Mammary epithelial cell (primary cell): ENCODE measurements at regions of chr18 and their contacts with region 1.

Region 1: DNA sequence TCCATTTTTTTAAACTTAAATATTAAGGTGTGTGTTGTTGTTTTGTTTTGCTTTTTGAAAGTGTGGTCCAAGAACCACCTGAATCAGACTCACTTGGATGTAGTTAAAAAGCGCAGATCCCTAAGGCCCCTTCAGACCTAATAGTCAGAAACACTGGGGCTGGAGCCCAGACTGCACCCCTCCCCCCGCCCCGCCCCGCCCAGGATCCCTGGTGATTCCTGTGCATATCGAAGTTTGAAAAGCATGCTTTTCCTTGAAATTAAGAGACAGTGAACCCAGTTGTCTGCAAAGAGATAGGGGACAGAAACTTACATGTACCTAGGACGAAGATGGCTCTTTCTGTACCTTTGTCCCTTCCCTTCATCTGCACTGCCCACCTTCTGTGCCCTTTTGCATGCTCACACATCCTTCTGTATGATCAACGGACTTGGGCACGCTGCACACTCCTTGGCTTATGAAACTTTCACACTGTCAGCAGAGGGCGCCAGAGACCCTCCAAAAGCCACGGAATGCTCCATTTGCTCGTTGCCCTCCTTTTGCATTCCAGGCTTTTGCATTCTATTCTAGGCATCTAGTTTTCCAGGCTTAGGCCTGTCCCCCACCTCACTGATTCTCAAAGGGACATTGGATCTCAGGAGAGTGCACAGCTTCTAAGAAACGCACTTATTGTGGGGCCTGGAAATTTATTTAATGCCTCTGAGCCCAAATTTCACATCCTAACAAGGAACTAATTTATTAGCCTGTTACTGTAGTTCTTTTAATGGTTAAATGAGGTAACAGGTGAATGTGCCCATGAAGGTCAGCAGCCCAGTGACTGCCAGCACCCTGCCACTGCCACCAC is 32.8 kb upstream of the SLC14A1 start:
- DNase-seq: peak; percentile 66
- H3K4me3 ChIP-seq: no peak overlapping the region
- H3K27ac ChIP-seq: no peak overlapping the region
- H3K4me1 ChIP-seq: no peaks in the 10 kb centered on the region
- H3K27me3 ChIP-seq: no peaks in the 10 kb centered on the region
- CTCF ChIP-seq: peak; percentile 85 to 88

Region 2: DNA sequence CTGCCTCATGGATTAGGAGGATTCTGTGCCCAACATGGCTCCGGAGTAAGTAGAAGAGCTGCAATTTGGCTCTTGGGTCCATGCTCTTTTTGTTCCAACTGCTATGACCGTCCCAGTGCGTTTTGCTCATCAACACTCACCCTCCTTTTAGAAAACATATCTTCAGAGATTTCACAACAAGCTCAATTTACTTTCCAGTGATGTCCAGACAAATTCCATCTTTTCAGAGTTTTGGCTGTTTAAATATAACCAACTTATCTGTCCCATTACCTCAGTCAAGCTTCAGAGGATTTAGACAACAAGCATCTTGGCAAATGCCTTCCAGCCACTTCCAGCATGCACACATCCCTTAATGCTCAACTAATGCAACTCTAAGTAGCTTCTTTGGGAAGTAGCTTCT is 82.8 kb before region 1 on chr18:
- CTCF ChIA-PET with region 1: no interaction called
- dilution Hi-C with region 1: no loop called
- in situ Hi-C with region 1: no loop called
- intact Hi-C with region 1: no loop called
- DNase-seq: no peak
- H3K4me3 ChIP-seq: no peak overlapping the region
- H3K27ac ChIP-seq: no peak overlapping the region
- H3K4me1 ChIP-seq: no peaks in the 10 kb centered on the region
- H3K27me3 ChIP-seq: peaks cover 6% of the 10 kb centered on the region
- CTCF ChIP-seq: no peak

Region 3: DNA sequence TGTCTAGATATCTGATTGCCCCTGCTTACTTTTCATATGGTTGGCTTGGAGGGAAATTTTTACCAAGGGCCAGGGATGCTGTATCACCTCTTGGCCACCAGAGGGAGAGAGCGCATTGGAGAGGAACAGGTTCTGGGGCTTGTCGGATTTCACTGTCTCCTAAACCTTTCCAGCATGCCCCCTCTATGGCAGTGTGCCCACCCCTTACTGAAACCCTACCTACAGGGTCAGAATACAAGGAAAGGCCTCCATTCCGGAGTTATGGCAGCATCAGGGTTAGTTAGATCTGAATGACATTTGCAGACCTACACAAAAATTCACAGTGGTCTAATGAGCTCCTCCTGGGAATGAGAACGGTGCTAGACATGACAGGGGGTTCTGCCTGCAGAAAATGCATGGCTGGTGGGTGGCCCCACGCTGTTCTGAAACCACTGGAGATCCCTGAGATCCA is 70.1 kb before region 1 on chr18:
- CTCF ChIA-PET with region 1: no interaction called
- dilution Hi-C with region 1: no loop called
- in situ Hi-C with region 1: no loop called
- intact Hi-C with region 1: loop called (anchors 2 kb)
- DNase-seq: peak; percentile 16
- H3K4me3 ChIP-seq: no peak overlapping the region
- H3K27ac ChIP-seq: no peak overlapping the region
- H3K4me1 ChIP-seq: peaks cover 25% of the 10 kb centered on the region
- H3K27me3 ChIP-seq: no peaks in the 10 kb centered on the region
- CTCF ChIP-seq: peak; percentile 96 to 97

Region 4: GRCh38 chr18:45722899-45723298 is 31.7 kb after region 1 on chr18:
- CTCF ChIA-PET with region 1: no interaction called
- dilution Hi-C with region 1: no loop called
- in situ Hi-C with region 1: no loop called
- intact Hi-C with region 1: loop called (anchors 2 kb)
- DNase-seq: peak; percentile 57
- H3K4me3 ChIP-seq: no peak overlapping the region
- H3K27ac ChIP-seq: no peak overlapping the region
- H3K4me1 ChIP-seq: peaks cover 3% of the 10 kb centered on the region
- H3K27me3 ChIP-seq: no peaks in the 10 kb centered on the region
- CTCF ChIP-seq: peak; percentile 81 to 94

Region 5: GRCh38 chr18:45775241-45775676 is 84.1 kb after region 1 on chr18:
- CTCF ChIA-PET with region 1: no interaction called
- dilution Hi-C with region 1: loop called (anchors 5 kb)
- in situ Hi-C with region 1: no loop called
- intact Hi-C with region 1: no loop called
- DNase-seq: no peak
- H3K4me3 ChIP-seq: peak overlapping the region in 1 of 3 experiments; percentile 35
- H3K27ac ChIP-seq: peak overlapping the region; percentile 68
- H3K4me1 ChIP-seq: peaks cover 35% of the 10 kb centered on the region
- H3K27me3 ChIP-seq: no peaks in the 10 kb centered on the region
- CTCF ChIP-seq: no peak

Region 6: GRCh38 chr18:45879681-45880655 is 188.8 kb after region 1 on chr18:
- CTCF ChIA-PET with region 1: no interaction called
- dilution Hi-C with region 1: no loop called
- in situ Hi-C with region 1: loop called (anchors 5 to 10 kb)
- intact Hi-C with region 1: loop called (anchors 1 kb)
- DNase-seq: peak; percentile 50
- H3K4me3 ChIP-seq: no peak overlapping the region
- H3K27ac ChIP-seq: no peak overlapping the region
- H3K4me1 ChIP-seq: no peaks in the 10 kb centered on the region
- H3K27me3 ChIP-seq: no peaks in the 10 kb centered on the region
- CTCF ChIP-seq: peak; percentile 99

Region 7: DNA sequence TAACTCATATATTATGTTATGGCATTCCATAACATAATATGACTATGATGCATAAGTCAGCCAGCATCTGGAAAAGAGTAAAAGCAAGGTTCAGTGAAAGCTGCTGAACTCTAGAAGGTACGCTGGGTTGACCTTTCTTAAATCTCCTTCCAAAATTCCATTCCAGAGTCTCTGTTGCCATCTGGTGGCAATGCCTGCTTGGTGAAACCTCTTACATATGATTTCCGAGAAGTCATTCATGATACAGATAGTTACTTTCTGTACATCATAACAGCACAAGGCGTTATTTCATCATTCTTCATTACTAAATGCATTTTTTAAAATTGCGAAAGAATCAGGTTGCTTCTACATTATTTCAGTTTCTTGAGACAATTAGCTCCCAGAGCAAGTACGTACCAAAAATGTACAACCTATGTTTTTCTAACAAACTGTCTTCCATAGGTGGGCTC is 282.9 kb after region 1 on chr18:
- CTCF ChIA-PET with region 1: no interaction called
- dilution Hi-C with region 1: no loop called
- in situ Hi-C with region 1: no loop called
- intact Hi-C with region 1: loop called (anchors 1 kb)
- DNase-seq: peak; percentile 76
- H3K4me3 ChIP-seq: no peak overlapping the region
- H3K27ac ChIP-seq: no peak overlapping the region
- H3K4me1 ChIP-seq: no peaks in the 10 kb centered on the region
- H3K27me3 ChIP-seq: no peaks in the 10 kb centered on the region
- CTCF ChIP-seq: peak; percentile 83 to 87